PC-9 (cell line): ENCODE measurements at regions of chr6 and their contacts with region 1.

Region 1: DNA sequence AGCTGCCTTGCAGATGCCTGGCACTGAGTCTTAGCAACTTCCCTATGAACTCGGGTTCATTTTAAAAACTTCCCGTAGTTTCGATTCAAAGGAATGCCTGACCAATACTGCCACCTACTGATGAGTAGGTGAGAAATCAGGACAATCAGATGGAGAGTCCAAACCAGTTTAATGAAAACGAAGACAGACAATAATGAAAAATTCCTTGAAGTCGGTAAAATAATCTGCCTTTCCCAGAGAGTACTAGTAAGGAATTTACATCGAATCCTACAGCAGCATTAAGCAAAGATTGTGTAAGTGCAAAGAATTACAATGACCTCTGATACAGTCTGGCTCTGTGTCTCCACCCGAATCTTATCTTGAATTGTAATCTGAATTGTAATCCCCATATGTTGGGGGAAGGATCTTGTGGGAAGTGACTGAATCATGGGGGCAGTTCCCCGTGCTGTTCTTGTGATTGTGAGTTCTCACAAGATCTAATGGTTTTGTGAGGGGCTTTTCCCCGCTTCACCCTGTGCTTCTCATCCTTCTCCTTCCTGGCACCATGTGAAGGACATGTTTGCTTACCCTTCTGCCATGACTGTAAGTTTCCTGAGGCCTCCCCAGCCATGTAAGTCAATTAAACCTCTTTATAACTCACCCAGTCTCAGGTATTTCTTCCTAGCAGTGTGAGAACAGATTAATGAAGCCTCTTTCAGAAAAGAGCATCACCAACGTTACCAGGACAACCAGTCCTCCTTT is 134.4 kb downstream of the ARHGAP18 start:
- DNase-seq: peak in 1 of 2 experiments; percentile 66
- H3K4me3 ChIP-seq: peak overlapping the region; percentile 34; the same call in 1 of the 2 replicates
- H3K27ac ChIP-seq: peak overlapping the region; percentile 13; the same call in 1 of the 2 replicates
- H3K4me1 ChIP-seq: peaks cover 6% of the 10 kb centered on the region
- H3K27me3 ChIP-seq: no peaks in the 10 kb centered on the region
- CTCF ChIP-seq: peak; percentile 92

Region 2: DNA sequence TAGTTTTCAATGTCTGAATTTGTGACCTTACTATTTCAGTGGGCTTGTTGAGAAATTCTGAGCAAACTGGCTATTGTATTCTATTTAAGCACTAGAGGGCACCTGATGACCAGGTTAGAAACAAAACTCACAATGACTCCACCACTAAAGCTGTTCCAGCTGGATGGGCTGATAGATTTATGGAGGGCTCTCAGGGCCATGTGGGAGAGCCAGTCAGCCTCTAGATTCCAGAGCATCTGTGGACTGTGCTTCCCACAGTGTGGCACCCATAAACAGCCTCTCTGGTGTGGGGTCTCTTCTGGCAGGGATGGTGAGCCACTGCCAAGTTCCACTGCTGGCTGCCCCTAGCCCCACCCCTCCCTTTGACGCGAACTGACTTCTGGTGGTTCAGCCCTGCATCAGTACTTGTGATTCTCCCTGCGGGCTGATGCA is 1969.4 kb before region 1 on chr6:
- CTCF ChIA-PET with region 1: no interaction called
- POLR2A ChIA-PET with region 1: no interaction called
- intact Hi-C with region 1: loop called (anchors 5 kb)
- DNase-seq: peak in 1 of 2 experiments; percentile 45
- H3K4me3 ChIP-seq: no peak overlapping the region
- H3K27ac ChIP-seq: no peak overlapping the region
- H3K4me1 ChIP-seq: peaks cover 20% of the 10 kb centered on the region
- H3K27me3 ChIP-seq: no peaks in the 10 kb centered on the region
- CTCF ChIP-seq: peak; percentile 77

Region 3: GRCh38 chr6:127737009-127737486 is 1838.5 kb before region 1 on chr6:
- CTCF ChIA-PET with region 1: no interaction called
- POLR2A ChIA-PET with region 1: no interaction called
- intact Hi-C with region 1: loop called (anchors 10 kb)
- DNase-seq: peak; percentile 40 to 56
- H3K4me3 ChIP-seq: no peak overlapping the region
- H3K27ac ChIP-seq: no peak overlapping the region
- H3K4me1 ChIP-seq: no peaks in the 10 kb centered on the region
- H3K27me3 ChIP-seq: no peaks in the 10 kb centered on the region
- CTCF ChIP-seq: peak; percentile 92

Region 4: DNA sequence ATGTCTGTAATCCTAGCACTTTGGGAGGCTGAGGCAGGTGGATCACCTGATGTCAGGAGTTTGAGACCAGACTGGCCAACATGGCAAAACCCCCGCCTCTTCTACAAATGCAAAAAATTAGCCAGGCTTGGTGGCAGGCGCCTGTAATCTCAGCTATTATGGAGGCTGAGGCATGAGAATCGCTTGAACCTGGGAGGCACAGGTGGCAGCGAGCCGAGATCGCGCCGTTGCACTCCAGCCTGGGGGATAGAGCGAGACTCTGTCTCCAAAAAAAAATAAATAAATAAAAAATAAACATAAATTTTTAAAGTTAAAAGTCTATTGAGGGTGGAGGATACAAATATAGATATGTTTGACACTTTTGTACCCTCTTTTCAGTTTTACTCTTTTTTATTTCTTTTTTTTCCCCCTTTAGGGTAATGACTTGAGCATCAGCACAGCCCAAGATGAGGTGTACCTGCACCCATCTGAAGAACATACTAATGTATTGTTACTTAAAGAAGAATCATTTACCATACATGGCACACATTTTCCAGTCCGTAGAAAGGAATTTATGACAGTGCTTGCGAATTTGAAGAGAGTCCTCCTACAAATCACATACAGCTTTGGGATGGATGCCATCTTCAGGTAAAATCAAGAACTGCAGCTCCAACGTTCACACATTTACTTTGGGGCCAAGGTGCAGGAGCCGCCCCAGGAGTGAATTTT is 323.7 kb before region 1 on chr6:
- CTCF ChIA-PET with region 1: no interaction called
- POLR2A ChIA-PET with region 1: no interaction called
- intact Hi-C with region 1: loop called (anchors 10 kb)
- DNase-seq: peak; percentile 42 to 64
- H3K4me3 ChIP-seq: no peak overlapping the region
- H3K27ac ChIP-seq: no peak overlapping the region
- H3K4me1 ChIP-seq: 0 out of 2 replicates have a peak, but pooled peaks cover 8% of the 10 kb centered on the region
- H3K27me3 ChIP-seq: no peaks in the 10 kb centered on the region
- CTCF ChIP-seq: peak; percentile 95

Region 5: DNA sequence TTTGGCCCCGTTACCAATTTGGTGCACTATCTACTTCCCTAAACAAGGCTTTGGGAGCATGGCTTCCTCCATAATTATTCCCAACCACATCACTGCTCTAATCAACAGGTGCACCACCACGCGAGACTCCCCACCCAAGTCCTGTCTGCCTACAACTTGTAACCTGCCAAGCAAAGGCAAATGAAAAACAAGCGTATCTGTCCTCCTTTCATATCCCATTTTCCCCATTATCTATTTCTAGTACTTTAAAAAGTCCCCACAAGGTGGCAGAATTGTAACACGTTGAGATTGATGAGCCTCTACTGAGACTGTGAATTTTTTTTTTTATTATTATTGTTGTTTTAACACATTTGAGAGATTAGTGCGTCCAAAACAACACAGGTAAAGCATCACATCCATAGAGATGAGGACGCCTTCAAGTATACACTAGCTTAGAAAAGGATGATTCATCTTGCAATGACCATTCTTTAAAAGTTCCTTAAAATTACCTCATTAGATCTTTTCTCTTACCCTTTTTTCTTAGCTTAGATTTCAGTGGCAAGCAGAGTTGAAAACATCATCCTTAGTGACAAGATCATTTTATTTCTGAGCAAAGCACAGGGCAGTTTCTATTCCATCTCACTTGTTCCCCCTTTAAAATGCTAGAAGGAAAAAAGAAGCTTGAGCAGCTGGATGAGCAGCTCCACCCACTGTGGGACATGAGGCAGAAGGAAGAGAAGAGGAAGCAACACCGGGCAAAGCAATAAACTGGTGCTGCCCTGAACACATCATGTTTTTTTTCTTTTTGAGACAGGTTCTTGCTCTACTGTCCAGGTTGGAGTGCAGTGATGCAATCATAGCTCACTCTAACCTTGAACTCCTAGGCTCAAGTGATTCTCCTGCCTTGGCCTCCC is 76.4 kb before region 1 on chr6:
- CTCF ChIA-PET with region 1: no interaction called
- POLR2A ChIA-PET with region 1: no interaction called
- intact Hi-C with region 1: loop called (anchors 1 kb)
- DNase-seq: peak in 1 of 2 experiments; percentile 57
- H3K4me3 ChIP-seq: peak overlapping the region; percentile 15; the same call in 1 of the 2 replicates
- H3K27ac ChIP-seq: no peak overlapping the region
- H3K4me1 ChIP-seq: peaks cover 25% of the 10 kb centered on the region
- H3K27me3 ChIP-seq: no peaks in the 10 kb centered on the region
- CTCF ChIP-seq: peak; percentile 96

Region 6: GRCh38 chr6:129606664-129607063 is 31.1 kb after region 1 on chr6:
- CTCF ChIA-PET with region 1: no interaction called
- POLR2A ChIA-PET with region 1: no interaction called
- intact Hi-C with region 1: no loop called
- DNase-seq: no peak
- H3K4me3 ChIP-seq: no peak overlapping the region
- H3K27ac ChIP-seq: no peak overlapping the region
- H3K4me1 ChIP-seq: no peaks in the 10 kb centered on the region
- H3K27me3 ChIP-seq: no peaks in the 10 kb centered on the region
- CTCF ChIP-seq: no peak

Region 7: DNA sequence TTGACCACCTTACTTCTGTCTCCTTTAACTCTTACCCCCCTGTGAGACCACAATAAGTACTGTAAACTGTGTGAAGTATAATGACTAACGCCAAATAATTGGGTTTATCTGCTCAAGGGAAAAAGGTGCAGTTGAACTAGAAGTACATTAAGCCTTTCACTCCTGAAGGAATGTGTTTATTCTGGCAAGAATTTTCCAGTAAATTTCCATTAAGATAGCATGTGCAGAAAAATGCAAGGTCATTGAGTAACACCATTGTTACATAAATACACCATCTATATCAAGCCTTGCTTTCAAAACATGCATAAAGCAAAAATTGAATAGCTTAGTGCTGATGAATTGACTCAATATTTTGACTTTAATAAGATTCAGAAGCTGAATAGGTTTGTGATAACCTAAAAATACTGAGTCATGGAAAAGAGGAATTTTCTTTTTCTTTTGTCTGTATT is 69.0 kb after region 1 on chr6:
- CTCF ChIA-PET with region 1: interaction called, 11 read pairs
- POLR2A ChIA-PET with region 1: no interaction called
- intact Hi-C with region 1: no loop called
- DNase-seq: peak in 1 of 2 experiments; percentile 87
- H3K4me3 ChIP-seq: no peak overlapping the region
- H3K27ac ChIP-seq: peak overlapping the region; percentile 66
- H3K4me1 ChIP-seq: peaks cover 31% of the 10 kb centered on the region
- H3K27me3 ChIP-seq: no peaks in the 10 kb centered on the region
- CTCF ChIP-seq: no peak